ENCODE measurements at regions of chr3 and their contacts with region 1.

Region 1: GRCh38 chr3:39189959-39190269 is 2.5 kb downstream of the XIRP1 start:
- DNase-seq: peak; percentile 70
- H3K4me3 Mint-ChIP-seq: no peak overlapping the region
- H3K27ac Mint-ChIP-seq: no peak overlapping the region
- H3K4me1 Mint-ChIP-seq: peaks cover 19% of the 10 kb centered on the region
- H3K27me3 Mint-ChIP-seq: no peaks in the 10 kb centered on the region

Region 2: DNA sequence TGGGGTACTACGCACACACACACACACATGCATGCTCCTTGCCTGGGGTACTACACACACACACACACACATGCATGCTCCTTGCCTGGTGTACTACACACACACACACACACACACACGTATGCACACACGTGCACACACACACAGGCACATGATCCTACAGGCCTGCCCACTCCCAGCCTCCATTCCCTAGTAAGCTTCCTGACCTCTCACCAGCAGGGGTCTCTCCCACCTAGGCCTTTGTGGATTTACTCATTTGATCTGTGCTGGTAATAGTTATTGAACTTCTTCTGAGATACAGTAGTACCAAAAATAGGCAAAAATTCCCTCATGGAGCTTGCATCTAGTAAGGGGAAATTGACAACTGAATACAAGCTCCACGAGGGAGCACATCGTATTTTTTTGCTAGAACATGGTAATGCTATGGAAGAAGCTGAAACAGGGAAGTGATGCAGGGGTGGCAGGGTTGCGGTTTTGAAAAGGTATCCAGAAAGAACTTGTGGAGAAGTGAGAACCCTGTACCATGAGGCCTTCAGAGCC is 63.3 kb before region 1 on chr3:
- CTCF ChIA-PET with region 1: interaction called, 20 read pairs
- POLR2A ChIA-PET with region 1: no interaction called
- intact Hi-C with region 1: loop called (anchors 2 kb)
- DNase-seq: peak; percentile 65
- H3K4me3 Mint-ChIP-seq: no peak overlapping the region
- H3K27ac Mint-ChIP-seq: no peak overlapping the region
- H3K4me1 Mint-ChIP-seq: peaks cover 18% of the 10 kb centered on the region
- H3K27me3 Mint-ChIP-seq: no peaks in the 10 kb centered on the region

Region 3: DNA sequence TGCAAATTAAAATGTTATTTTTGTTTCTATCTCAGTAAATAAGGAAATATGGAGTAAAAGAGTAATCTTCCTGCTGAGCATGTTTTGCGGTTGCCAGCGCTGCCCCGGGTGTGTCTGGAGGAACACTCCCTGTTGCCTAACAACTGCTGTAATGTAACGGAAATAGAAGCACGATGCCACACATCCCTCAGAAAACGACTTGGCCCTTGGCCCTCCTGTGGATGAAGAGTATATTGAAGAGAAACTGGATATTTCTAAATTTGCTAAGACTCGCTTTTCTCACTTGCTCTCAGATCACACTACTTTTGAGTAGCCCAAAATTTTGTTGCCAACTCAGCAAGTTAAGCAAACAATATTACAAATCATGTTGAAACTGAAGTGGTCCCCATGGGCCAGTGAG is 71.0 kb after region 1 on chr3:
- CTCF ChIA-PET with region 1: interaction called, 14 read pairs
- POLR2A ChIA-PET with region 1: no interaction called
- intact Hi-C with region 1: no loop called
- DNase-seq: peak; percentile 73
- H3K4me3 Mint-ChIP-seq: no peak overlapping the region
- H3K27ac Mint-ChIP-seq: peak overlapping the region; percentile 50
- H3K4me1 Mint-ChIP-seq: peaks cover 28% of the 10 kb centered on the region
- H3K27me3 Mint-ChIP-seq: peaks cover 4% of the 10 kb centered on the region

Region 4: DNA sequence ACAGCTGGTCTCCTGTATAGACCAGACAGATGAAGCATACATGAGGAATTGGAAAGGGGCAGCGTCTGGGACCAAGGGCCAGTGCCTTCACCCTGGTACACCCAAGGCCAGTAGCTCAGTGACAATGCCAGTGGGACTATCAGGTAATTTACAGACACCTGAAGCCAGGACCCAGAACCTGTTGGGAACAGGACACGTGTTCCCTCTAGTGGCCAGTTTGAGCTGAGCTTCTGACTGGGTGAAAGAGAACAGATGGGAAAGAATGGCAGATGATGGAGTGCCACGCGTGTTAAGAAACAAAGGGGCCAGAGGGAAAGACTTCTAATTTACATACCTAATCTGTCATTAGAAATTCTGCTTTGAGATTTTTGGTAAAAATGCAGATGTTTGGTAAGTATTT is 188.2 kb after region 1 on chr3:
- CTCF ChIA-PET with region 1: interaction called, 19 read pairs
- POLR2A ChIA-PET with region 1: no interaction called
- intact Hi-C with region 1: loop called (anchors 1 kb)
- DNase-seq: peak; percentile 73
- H3K4me3 Mint-ChIP-seq: no peak overlapping the region
- H3K27ac Mint-ChIP-seq: no peak overlapping the region
- H3K4me1 Mint-ChIP-seq: peaks cover 5% of the 10 kb centered on the region
- H3K27me3 Mint-ChIP-seq: no peaks in the 10 kb centered on the region

Measured in activated CD4-positive, alpha-beta memory T cell treated with anti-CD3 and anti-CD28 coated beads for 36 hours (primary cell).